ENCODE measurements at regions of chr10 and their contacts with region 1.

Region 1: GRCh38 chr10:6114805-6115341 is 26.0 kb downstream of the RBM17 start:
- DNase-seq: peak; percentile 54 to 85 (median 70)
- H3K4me3 ChIP-seq: no peak overlapping the region
- H3K27ac ChIP-seq: peak overlapping the region; percentile 11 to 84 (median 61)
- H3K4me1 ChIP-seq: peaks cover 0 to 18% of the 10 kb centered on the region in 2 donors
- H3K27me3 ChIP-seq: no peaks in the 10 kb centered on the region
- CTCF ChIP-seq: peak in 4 of 6 experiments; percentile 9 to 36 (median 18)
- POLR2A ChIP-seq: no peak

Region 2: GRCh38 chr10:6151087-6151977 is 36.5 kb after region 1 on chr10:
- intact Hi-C with region 1: loop called in 1 of 2 experiments (anchors 5 kb)
- DNase-seq: peak; percentile 70 to 86 (median 80)
- H3K4me3 ChIP-seq: peak overlapping the region in 1 of 4 donors; percentile 5
- H3K27ac ChIP-seq: peak overlapping the region in 4 of 5 donors; percentile 13 to 79 (median 50)
- H3K4me1 ChIP-seq: peaks cover 0 to 20% of the 10 kb centered on the region in 2 donors
- H3K27me3 ChIP-seq: no peaks in the 10 kb centered on the region
- CTCF ChIP-seq: peak; percentile 48 to 78 (median 72)
- POLR2A ChIP-seq: peak in 1 of 2 donors; percentile 16

Region 3: GRCh38 chr10:6195846-6196245 is 81.0 kb after region 1 on chr10:
- intact Hi-C with region 1: no loop called
- DNase-seq: peak in 5 of 7 donors; percentile 61 to 79 (median 65)
- H3K4me3 ChIP-seq: no peak overlapping the region
- H3K27ac ChIP-seq: peak overlapping the region in 4 of 5 donors; percentile 46 to 91 (median 78)
- H3K4me1 ChIP-seq: peaks cover 23 to 41% of the 10 kb centered on the region in 2 donors
- H3K27me3 ChIP-seq: no peaks in the 10 kb centered on the region
- CTCF ChIP-seq: no peak
- POLR2A ChIP-seq: no peak

Region 4: DNA sequence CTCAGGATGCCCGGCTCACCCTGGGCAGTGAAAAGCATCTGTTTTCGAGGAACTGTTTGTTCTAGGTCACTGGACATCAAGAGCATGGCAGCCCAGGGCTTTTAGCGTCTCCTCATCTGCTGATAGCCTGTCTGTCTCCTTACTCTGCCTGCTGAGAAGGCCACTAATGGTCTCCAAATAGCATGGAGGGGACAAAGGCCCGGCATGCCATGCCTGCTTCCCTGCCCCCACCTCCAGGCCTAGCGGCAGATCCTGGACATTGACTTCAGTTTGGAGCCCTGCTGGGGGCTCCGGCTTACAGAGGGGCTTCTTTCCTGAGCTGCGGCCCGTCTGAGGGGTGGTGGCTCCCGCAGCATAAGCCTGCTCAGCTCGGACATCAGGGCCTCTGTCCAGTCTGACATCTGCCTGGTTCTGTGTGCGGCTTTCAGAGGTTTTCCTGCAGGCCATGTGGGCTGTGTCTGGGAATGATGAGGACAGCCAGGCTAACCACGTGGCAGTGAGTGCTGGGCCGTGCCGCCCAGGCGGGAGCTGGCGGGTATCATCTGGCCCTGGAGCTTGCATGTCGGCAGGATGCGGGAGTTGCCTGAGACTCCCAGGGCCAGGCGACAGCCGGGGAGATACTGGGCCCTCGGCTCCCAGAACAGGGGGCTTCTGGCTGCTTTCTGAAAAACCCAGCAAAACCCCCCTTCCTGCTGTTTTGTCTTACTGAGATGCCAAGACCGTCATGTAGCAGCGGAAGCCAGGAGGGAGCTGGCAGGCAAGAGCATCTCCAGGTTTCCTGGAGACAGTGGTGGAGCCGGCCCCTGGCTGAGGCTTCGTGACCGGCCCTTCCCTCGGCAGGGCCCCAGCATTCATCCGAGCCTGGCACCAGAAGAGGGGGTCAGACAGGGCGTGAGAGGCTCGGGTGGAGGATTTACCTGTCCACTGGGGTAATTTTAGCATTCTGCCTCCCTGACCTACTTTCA is 97.1 kb after region 1 on chr10:
- intact Hi-C with region 1: loop called in 1 of 2 experiments (anchors 10 kb)
- DNase-seq: peak in 1 of 7 donors; percentile 80
- H3K4me3 ChIP-seq: no peak overlapping the region
- H3K27ac ChIP-seq: peak overlapping the region in 2 of 5 donors; percentile 14 to 65
- H3K4me1 ChIP-seq: peaks cover 0 to 11% of the 10 kb centered on the region in 2 donors
- H3K27me3 ChIP-seq: no peaks in the 10 kb centered on the region
- CTCF ChIP-seq: no peak
- POLR2A ChIP-seq: no peak

Measured in adrenal gland (tissue), 19 donors.